ENCODE measurements at regions of chr13 and their contacts with region 1.

Region 1: GRCh38 chr13:49400755-49401659 is 42.9 kb downstream of the CAB39L start:
- DNase-seq: peak; percentile 87
- H3K4me3 ChIP-seq: peak overlapping the region; percentile 75
- H3K27ac ChIP-seq: peak overlapping the region; percentile 86
- H3K4me1 ChIP-seq: peaks cover 35% of the 10 kb centered on the region
- CTCF ChIP-seq: no peak

Region 2: DNA sequence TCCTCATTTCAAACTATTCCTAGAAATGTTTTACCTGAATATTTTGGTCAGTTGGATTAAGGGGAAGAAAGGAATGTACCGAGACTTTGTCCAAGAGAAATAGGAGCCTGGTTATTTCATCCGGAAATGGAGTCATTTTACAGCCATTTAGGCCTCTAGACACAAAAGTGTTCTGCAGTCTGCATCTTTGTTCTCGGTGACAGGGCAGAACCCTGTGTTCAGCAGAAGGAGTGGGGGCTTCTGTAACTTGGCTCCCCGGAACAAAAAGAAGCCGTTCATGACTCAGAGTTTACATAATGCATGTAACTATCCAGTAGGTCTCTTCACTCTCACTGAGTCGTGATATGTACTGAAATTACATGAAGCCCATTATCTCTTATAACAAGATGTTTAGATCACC is 446.9 kb before region 1 on chr13:
- CTCF ChIA-PET with region 1: no interaction called
- POLR2A ChIA-PET with region 1: no interaction called
- intact Hi-C with region 1: no loop called
- DNase-seq: no peak
- H3K4me3 ChIP-seq: no peak overlapping the region
- H3K27ac ChIP-seq: no peak overlapping the region
- H3K4me1 ChIP-seq: no peaks in the 10 kb centered on the region
- CTCF ChIP-seq: no peak

Region 3: GRCh38 chr13:49367640-49368422 is 33.2 kb before region 1 on chr13:
- CTCF ChIA-PET with region 1: no interaction called
- POLR2A ChIA-PET with region 1: interaction called, 35 read pairs
- intact Hi-C with region 1: loop called (anchors 1 kb)
- DNase-seq: no peak
- H3K4me3 ChIP-seq: peak overlapping the region; percentile 53
- H3K27ac ChIP-seq: peak overlapping the region; percentile 98
- H3K4me1 ChIP-seq: peaks cover 81% of the 10 kb centered on the region
- CTCF ChIP-seq: 0 out of 2 replicates have a peak, but pooled peaks have one; percentile 12

Region 4: GRCh38 chr13:49421391-49421790 is 20.4 kb after region 1 on chr13:
- CTCF ChIA-PET with region 1: no interaction called
- POLR2A ChIA-PET with region 1: interaction called, 13 read pairs
- intact Hi-C with region 1: no loop called
- DNase-seq: peak; percentile 83
- H3K4me3 ChIP-seq: no peak overlapping the region
- H3K27ac ChIP-seq: no peak overlapping the region
- H3K4me1 ChIP-seq: peaks cover 54% of the 10 kb centered on the region
- CTCF ChIP-seq: peak; percentile 80

Measured in OCI-LY7 (cell line).